ENCODE measurements at regions of chr9 and their contacts with region 1.

Region 1: GRCh38 chr9:89533411-89534095 is 35.6 kb upstream of the SEMA4D start:
- DNase-seq: no peak
- H3K4me3 ChIP-seq: no peak overlapping the region
- H3K27ac ChIP-seq: no peak overlapping the region
- H3K4me1 ChIP-seq: no peaks in the 10 kb centered on the region
- H3K27me3 ChIP-seq: no peaks in the 10 kb centered on the region
- CTCF ChIP-seq: no peak
- EP300 ChIP-seq: no peak
- POLR2A ChIP-seq: no peak

Region 2: GRCh38 chr9:89012294-89013042 is 521.1 kb before region 1 on chr9:
- intact Hi-C with region 1: loop called in 1 of 4 experiments (anchors 2 kb)
- DNase-seq: no peak
- H3K4me3 ChIP-seq: no peak overlapping the region
- H3K27ac ChIP-seq: no peak overlapping the region
- H3K4me1 ChIP-seq: no peaks in the 10 kb centered on the region
- H3K27me3 ChIP-seq: no peaks in the 10 kb centered on the region
- CTCF ChIP-seq: no peak
- EP300 ChIP-seq: no peak
- POLR2A ChIP-seq: no peak

Region 3: DNA sequence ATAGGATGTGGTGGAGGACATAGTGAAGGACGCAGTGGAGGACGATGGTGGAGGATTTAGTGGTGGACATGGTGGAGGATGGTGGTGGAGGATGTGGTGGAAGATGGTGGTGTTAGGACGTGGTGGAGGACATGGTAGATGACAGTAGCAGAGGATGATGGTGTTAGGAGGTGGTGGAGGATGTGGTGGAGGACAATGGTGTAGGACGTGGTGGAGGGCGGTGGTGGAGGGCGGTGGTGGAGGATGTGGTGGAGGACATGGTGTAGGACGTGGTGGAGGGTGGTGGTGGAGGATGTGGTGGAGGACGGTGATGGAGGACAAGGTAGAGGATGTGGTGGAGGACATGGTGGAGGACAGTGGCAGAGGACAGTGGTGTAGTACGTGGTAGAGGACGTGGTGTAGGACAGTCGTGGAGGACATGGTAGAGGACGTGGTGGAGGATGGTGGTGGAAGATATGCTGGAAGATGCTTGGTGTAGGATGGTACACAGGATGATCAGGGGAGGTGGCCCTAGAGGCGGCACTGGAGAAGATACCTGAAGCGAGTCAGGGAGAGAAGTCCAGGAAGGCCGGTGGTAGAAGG is 473.5 kb before region 1 on chr9:
- intact Hi-C with region 1: no loop called
- DNase-seq: no peak
- H3K4me3 ChIP-seq: no peak overlapping the region
- H3K27ac ChIP-seq: no peak overlapping the region
- H3K4me1 ChIP-seq: no peaks in the 10 kb centered on the region
- H3K27me3 ChIP-seq: no peaks in the 10 kb centered on the region
- CTCF ChIP-seq: no peak
- EP300 ChIP-seq: no peak
- POLR2A ChIP-seq: no peak

Measured in ovary (tissue), 10 donors.